ENCODE measurements at regions of chr7 and their contacts with region 1.

Region 1: GRCh38 chr7:103640031-103640779 is 194.2 kb upstream of the SLC26A5 start:
- DNase-seq: peak; percentile 84
- ATAC-seq: peak; percentile 30
- H3K4me3 ChIP-seq: no peak overlapping the region
- H3K27ac ChIP-seq: peak overlapping the region; percentile 68
- H3K4me1 ChIP-seq: peaks cover 6% of the 10 kb centered on the region; the same call in 1 of the 2 replicates
- H3K27me3 ChIP-seq: no peaks in the 10 kb centered on the region
- CTCF ChIP-seq: no peak
- POLR2A ChIP-seq: no peak
- RAD21 ChIP-seq: no peak

Region 2: GRCh38 chr7:103668279-103668941 is 28.2 kb after region 1 on chr7:
- CTCF ChIA-PET with region 1: no interaction called
- POLR2A ChIA-PET with region 1: no interaction called
- dilution Hi-C with region 1: no loop called
- in situ Hi-C with region 1: no loop called
- intact Hi-C with region 1: loop called (anchors 2 kb)
- DNase-seq: no peak
- ATAC-seq: no peak
- H3K4me3 ChIP-seq: no peak overlapping the region
- H3K27ac ChIP-seq: no peak overlapping the region
- H3K4me1 ChIP-seq: no peaks in the 10 kb centered on the region; the same call in 1 of the 2 replicates
- H3K27me3 ChIP-seq: no peaks in the 10 kb centered on the region
- CTCF ChIP-seq: no peak
- POLR2A ChIP-seq: no peak
- RAD21 ChIP-seq: no peak

Region 3: DNA sequence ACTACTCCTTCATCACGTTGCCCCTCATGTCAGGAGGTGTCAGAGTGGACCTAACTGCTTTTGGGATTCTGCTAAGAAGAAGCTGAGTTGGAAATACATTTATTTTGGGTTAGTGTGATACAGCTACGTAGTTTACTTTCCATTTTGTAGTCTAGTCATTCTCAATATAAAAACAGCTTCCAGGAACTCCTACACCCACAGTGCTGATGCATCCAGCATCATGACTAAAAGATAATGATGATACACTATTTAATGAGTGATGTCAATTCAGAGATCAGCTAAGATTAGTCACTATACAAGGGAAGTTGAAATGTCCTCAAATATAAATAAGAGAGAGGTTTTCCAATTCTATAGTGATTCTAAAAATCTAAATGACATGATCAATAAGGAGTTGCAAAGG is 70.0 kb after region 1 on chr7:
- CTCF ChIA-PET with region 1: no interaction called
- POLR2A ChIA-PET with region 1: no interaction called
- dilution Hi-C with region 1: no loop called
- in situ Hi-C with region 1: no loop called
- intact Hi-C with region 1: no loop called
- DNase-seq: peak; percentile 71
- ATAC-seq: peak; percentile 54
- H3K4me3 ChIP-seq: no peak overlapping the region
- H3K27ac ChIP-seq: no peak overlapping the region
- H3K4me1 ChIP-seq: peaks cover 1% of the 10 kb centered on the region; the same call in 1 of the 2 replicates
- H3K27me3 ChIP-seq: no peaks in the 10 kb centered on the region
- CTCF ChIP-seq: no peak
- POLR2A ChIP-seq: no peak
- RAD21 ChIP-seq: no peak

Measured in IMR-90 (cell line).